ENCODE measurements at regions of chr5 and their contacts with region 1.

Region 1: DNA sequence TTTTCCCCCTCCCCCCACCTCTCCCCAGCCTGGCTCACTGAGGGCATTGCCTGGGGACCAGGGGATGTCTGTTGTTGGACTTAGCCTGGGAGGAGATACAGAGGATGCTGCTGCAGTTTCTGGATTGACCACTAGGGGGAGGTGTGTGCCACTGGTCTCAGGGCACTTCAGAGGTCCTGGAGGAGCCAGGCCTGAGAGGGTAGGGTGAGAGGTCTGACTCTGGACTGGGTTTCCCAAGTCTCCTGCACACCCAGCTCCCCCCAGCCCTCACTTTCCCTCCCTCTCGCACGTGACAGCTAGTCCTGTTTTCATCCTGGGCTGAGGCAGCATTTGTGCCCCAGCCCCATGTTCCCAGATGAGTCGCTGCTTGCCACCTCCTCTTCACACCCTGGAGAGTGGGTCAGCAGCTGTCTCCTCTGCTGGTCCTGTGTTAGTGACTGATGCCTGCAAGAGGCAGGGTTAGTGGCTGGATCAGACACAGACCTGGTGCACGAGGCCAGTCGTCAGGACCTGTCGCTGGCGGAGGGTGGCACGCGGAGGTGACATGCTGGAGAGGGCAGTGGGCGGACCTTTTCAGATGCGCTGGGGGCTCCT is 4.4 kb downstream of the IL3 start:
- DNase-seq: peak; percentile 67
- H3K4me3 ChIP-seq: no peak overlapping the region
- H3K27ac ChIP-seq: no peak overlapping the region
- H3K4me1 ChIP-seq: peaks cover 8% of the 10 kb centered on the region
- H3K27me3 ChIP-seq: no peaks in the 10 kb centered on the region
- CTCF ChIP-seq: peak; percentile 98 to 99

Region 2: GRCh38 chr5:131589510-131590348 is 475.1 kb before region 1 on chr5:
- CTCF ChIA-PET with region 1: no interaction called
- dilution Hi-C with region 1: no loop called
- in situ Hi-C with region 1: no loop called
- intact Hi-C with region 1: loop called (anchors 1 kb)
- DNase-seq: peak; percentile 10
- H3K4me3 ChIP-seq: no peak overlapping the region
- H3K27ac ChIP-seq: no peak overlapping the region
- H3K4me1 ChIP-seq: peaks cover 11% of the 10 kb centered on the region
- H3K27me3 ChIP-seq: no peaks in the 10 kb centered on the region
- CTCF ChIP-seq: peak; percentile 80 to 86

Region 3: DNA sequence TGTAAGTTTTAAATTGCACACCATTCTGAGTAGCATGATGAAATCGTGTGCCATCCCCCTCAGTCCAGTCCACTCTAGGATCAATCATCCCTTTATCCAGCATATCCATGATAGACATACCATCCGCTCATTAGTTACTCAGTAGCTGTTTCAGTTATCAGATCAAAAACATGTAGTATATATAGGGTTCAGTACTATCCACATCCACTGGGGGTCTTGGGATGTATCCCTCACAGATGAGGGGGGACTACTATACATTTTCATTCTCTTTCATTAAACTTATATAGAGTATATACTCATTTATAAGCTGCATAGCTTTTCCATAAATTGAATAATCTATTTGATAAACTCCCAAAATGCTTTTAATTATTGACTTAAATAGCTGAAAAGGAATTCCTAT is 187.0 kb before region 1 on chr5:
- CTCF ChIA-PET with region 1: no interaction called
- dilution Hi-C with region 1: no loop called
- in situ Hi-C with region 1: no loop called
- intact Hi-C with region 1: no loop called
- DNase-seq: no peak
- H3K4me3 ChIP-seq: no peak overlapping the region
- H3K27ac ChIP-seq: no peak overlapping the region
- H3K4me1 ChIP-seq: no peaks in the 10 kb centered on the region
- H3K27me3 ChIP-seq: peaks cover 3% of the 10 kb centered on the region
- CTCF ChIP-seq: no peak

Region 4: DNA sequence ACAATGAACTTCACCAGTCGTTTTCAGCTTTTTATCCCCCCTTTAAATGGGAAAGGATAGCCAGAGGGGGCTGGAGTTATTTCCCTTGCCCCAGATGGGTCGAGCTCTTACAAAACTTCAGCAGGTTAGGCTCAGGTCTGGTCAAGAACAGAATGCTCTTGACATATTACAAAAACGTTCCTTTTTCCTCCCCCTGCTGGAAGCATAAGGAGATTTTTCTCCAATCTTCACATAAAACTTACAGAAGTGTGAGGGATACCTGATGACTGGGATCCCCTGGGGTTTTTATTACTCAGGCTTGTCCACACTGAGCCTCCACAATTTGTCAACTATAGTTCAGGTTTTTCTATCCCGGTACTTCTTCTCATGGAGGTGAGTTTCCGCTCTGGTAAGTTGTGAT is 69.5 kb after region 1 on chr5:
- CTCF ChIA-PET with region 1: no interaction called
- dilution Hi-C with region 1: no loop called
- in situ Hi-C with region 1: no loop called
- intact Hi-C with region 1: loop called (anchors 1 kb)
- DNase-seq: peak; percentile 73
- H3K4me3 ChIP-seq: no peak overlapping the region
- H3K27ac ChIP-seq: peak overlapping the region; percentile 8
- H3K4me1 ChIP-seq: peaks cover 24% of the 10 kb centered on the region
- H3K27me3 ChIP-seq: no peaks in the 10 kb centered on the region
- CTCF ChIP-seq: peak; percentile 18 to 44

Region 5: DNA sequence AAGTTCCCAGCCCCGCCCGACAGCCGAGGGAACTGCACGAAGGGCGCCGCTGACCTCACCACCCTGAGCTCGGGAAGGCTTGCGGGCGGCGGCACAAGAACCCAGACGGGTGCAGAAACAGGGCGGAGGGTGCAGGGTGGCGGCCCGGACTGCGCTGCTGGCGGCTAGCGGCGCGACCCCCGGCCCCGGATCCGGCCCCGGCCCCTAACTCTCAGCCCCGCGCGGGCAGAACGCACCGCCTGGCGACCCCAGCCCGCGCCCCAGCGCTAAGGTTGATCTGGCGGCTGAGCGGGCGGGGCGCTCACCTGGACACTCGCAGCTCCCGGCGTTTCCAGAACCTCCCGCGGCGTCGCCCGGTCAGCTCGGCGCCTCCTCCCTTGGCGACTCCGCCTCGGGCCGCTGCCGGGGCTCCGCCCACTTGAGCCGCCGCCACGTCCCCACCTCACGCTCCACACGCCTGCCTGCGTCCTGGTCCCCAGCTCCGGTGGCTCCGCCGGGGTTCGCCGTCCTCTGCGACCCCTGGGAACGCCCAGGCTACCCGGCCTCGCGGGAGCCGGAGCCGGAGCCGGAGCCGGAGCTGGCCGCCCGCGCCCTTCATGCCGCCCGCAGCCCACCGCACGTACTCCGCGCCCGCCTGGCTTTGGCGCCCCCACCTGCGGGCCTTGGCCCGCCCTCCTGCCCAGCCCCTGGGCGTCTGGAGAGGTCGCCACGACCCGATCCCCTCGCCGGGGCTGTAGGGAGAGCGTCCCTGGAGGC is 162.8 kb after region 1 on chr5 and contains the start of gene P4HA2:
- CTCF ChIA-PET with region 1: no interaction called
- dilution Hi-C with region 1: no loop called
- in situ Hi-C with region 1: no loop called
- intact Hi-C with region 1: loop called (anchors 1 kb)
- DNase-seq: peak; percentile 77
- H3K4me3 ChIP-seq: peak within 1 kb of the TSS; percentile 51 to 72 (median 67)
- H3K27ac ChIP-seq: peak within 1 kb of the TSS; percentile 65
- H3K4me1 ChIP-seq: peaks cover 42% of the 10 kb centered on the region
- H3K27me3 ChIP-seq: no peaks in the 10 kb centered on the region
- CTCF ChIP-seq: peak in 1 of 2 donors; percentile 22
- total RNA-seq, gene P4HA2: 103 to 142 TPM

Region 6: DNA sequence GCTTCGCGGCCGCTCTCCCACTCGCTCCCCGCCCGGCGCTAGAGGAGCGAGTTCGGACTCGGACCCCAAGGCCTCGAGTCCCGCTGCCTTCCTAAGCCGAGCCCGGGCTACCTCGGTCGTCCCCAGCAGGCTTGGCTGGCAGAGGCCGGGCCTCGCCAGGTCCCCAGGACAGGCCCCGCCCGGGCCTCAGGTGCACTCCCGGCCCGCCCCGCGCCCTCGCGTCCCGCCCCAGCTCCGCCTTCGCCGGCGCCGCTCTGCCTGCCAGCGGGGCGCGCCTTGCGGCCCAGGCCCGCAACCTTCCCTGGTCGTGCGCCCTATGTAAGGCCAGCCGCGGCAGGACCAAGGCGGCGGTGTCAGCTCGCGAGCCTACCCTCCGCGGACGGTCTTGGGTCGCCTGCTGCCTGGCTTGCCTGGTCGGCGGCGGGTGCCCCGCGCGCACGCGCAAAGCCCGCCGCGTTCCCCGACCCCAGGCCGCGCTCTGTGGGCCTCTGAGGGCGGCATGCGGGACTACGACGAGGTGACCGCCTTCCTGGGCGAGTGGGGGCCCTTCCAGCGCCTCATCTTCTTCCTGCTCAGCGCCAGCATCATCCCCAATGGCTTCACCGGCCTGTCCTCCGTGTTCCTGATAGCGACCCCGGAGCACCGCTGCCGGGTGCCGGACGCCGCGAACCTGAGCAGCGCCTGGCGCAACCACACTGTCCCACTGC is 304.8 kb after region 1 on chr5 and contains the start of gene SLC22A5:
- CTCF ChIA-PET with region 1: interaction called, 3 read pairs
- dilution Hi-C with region 1: no loop called
- in situ Hi-C with region 1: no loop called
- intact Hi-C with region 1: loop called (anchors 5 kb)
- DNase-seq: peak; percentile 78
- H3K4me3 ChIP-seq: peak within 1 kb of the TSS; percentile 68 to 91 (median 85)
- H3K27ac ChIP-seq: peak within 1 kb of the TSS; percentile 94
- H3K4me1 ChIP-seq: peaks cover 38% of the 10 kb centered on the region
- H3K27me3 ChIP-seq: no peaks in the 10 kb centered on the region
- CTCF ChIP-seq: no peak
- total RNA-seq, gene SLC22A5: 11.5 to 13.8 TPM

Region 7: DNA sequence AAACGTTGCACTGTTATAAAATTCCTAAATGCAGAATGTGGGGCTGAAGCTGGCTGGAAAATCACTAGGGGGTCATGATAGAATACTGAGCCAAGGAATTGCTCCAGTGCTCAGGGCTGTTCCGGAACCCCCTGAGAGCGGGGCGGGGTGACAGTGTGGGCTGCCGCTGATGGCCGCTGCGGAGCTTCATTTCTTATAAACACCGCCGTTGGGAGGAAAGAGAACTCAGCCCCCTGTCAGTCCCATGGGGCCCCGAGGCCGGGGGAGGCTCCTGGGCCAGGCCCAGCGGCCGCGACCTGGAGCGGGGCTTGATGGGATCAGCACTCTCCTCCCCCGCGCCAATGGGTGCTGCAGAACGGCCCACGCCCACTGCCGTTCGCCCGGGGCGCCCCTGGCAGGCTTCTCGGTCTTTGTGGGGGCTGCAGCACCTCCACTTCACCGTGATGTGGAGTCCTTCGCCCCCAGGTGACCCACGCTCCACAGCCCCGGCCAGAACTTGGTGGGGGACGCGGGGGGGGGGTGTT is 430.9 kb after region 1 on chr5:
- CTCF ChIA-PET with region 1: interaction called, 3 read pairs
- dilution Hi-C with region 1: no loop called
- in situ Hi-C with region 1: loop called in 1 of 2 experiments (anchors 25 kb)
- intact Hi-C with region 1: loop called (anchors 1 kb)
- DNase-seq: peak; percentile 41
- H3K4me3 ChIP-seq: peak overlapping the region; percentile 3 to 70 (median 31)
- H3K27ac ChIP-seq: peak overlapping the region; percentile 45
- H3K4me1 ChIP-seq: peaks cover 37% of the 10 kb centered on the region
- H3K27me3 ChIP-seq: no peaks in the 10 kb centered on the region
- CTCF ChIP-seq: no peak

Region 8: DNA sequence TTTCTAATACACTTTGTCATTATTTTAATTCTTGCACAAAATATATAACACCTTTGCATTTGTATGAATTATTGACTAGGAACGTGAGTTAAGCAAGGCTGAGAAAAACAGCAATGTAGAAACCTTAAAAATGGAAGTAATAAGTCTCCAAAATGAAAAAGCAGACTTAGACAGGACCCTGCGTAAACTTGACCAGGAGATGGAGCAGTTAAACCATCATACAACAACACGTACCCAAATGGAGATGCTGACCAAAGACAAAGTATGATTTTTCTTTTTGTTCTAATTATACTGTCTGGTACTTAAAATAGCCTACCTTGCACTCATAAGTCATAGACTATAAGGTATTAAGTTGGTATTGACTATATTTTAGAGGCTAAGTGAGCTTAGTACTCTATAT is 526.3 kb after region 1 on chr5:
- CTCF ChIA-PET with region 1: no interaction called
- dilution Hi-C with region 1: no loop called
- in situ Hi-C with region 1: no loop called
- intact Hi-C with region 1: no loop called
- DNase-seq: no peak
- H3K4me3 ChIP-seq: no peak overlapping the region
- H3K27ac ChIP-seq: no peak overlapping the region
- H3K4me1 ChIP-seq: peaks cover 8% of the 10 kb centered on the region
- H3K27me3 ChIP-seq: no peaks in the 10 kb centered on the region
- CTCF ChIP-seq: no peak